ENCODE measurements at regions of chr12 and their contacts with region 1.

Region 1: DNA sequence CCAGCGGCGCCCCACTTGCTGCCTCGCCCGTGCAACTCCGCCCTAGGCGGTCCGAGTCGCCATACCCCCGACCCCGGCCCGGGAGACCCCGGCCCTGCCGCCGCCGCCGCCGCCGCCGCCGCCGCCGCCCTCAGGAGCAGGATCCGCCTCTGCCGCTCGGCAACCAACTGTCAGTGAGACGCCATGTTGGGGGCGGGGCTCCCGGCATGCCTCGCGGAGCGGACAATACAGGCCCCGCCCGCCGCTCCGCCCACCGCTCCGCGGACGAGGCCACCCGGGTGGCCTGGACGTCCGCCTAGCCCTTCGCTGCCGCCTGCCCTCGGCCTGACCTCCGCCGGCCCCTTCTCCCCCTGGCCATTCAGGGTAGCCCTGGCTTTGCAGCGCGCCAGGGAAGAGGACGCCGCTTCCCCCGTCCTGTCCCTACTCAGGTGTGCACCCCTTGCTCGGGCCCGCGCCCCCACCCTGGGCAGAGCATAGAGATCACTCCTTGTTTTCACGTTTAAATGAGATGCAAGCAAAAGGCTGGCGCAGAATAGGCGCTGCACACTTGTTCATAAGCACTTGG is at the start of gene HECTD4:
- DNase-seq: peak; percentile 89
- H3K4me3 Mint-ChIP-seq: peak within 1 kb of the TSS; percentile 88
- H3K27ac Mint-ChIP-seq: peak within 1 kb of the TSS; percentile 72
- H3K4me1 Mint-ChIP-seq: peaks cover 18% of the 10 kb centered on the region
- H3K27me3 Mint-ChIP-seq: no peaks in the 10 kb centered on the region
- CTCF ChIP-seq: no peak
- total RNA-seq, gene HECTD4: 35.2 and 46.7 TPM in 2 replicates

Region 2: DNA sequence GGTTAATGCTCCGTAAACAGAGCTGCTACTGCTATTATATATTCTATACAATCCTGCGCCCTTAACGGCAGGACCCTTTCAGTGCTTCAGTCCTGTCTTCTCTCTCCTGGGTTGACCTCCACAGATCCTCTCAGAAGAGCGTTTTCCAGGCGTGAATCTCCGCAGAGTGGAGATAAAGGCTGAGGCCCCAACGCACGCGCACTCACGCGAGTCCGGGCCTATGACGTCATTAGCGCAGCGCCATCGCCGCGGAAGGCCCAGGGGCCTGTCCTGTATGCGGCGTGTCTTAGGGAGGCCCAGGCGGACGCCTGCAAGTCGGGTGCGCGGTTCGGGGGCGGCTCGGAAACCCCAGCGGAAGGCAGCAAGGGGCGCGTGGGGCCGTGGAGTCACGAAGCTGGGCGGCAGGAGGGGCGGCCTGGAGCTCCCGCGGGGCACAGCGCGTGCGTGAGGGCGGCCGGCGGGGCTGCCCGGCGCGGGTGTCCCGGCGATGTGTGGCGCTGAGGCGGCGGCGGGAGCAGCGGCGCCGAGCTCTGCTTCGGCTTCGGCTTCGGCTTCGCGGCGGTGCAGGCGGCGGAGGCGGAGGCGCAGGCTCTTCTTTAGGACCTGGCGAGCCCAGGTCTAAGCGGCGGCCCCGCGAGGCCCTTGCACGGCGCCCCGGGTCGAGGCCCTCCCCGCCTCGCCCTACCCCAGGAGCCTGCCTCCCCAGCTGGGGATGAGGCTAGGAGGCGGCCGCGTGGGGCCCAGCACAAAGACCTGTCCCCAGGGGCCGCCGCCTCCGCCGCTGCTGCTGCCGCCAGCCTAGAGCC is 540.4 kb before region 1 on chr12 and contains the start of gene MAPKAPK5:
- CTCF ChIA-PET with region 1: no interaction called
- POLR2A ChIA-PET with region 1: no interaction called
- intact Hi-C with region 1: loop called (anchors 10 kb)
- DNase-seq: peak; percentile 92
- H3K4me3 Mint-ChIP-seq: peak within 1 kb of the TSS; percentile 93
- H3K27ac Mint-ChIP-seq: peak within 1 kb of the TSS; percentile 99
- H3K4me1 Mint-ChIP-seq: peaks cover 26% of the 10 kb centered on the region
- H3K27me3 Mint-ChIP-seq: no peaks in the 10 kb centered on the region
- CTCF ChIP-seq: no peak
- total RNA-seq, gene MAPKAPK5: 46.3 and 51.3 TPM in 2 replicates

Region 3: GRCh38 chr12:112116232-112117060 is 265.9 kb before region 1 on chr12:
- CTCF ChIA-PET with region 1: interaction called, 6 read pairs
- POLR2A ChIA-PET with region 1: no interaction called
- intact Hi-C with region 1: loop called (anchors 1 kb)
- DNase-seq: peak; percentile 35
- H3K4me3 Mint-ChIP-seq: peak overlapping the region; percentile 28
- H3K27ac Mint-ChIP-seq: peak overlapping the region; percentile 90
- H3K4me1 Mint-ChIP-seq: peaks cover 18% of the 10 kb centered on the region
- H3K27me3 Mint-ChIP-seq: no peaks in the 10 kb centered on the region
- CTCF ChIP-seq: no peak

Region 4: GRCh38 chr12:112243255-112244110 is 138.8 kb before region 1 on chr12:
- CTCF ChIA-PET with region 1: interaction called, 10 read pairs
- POLR2A ChIA-PET with region 1: interaction called, 4 read pairs
- intact Hi-C with region 1: no loop called
- DNase-seq: no peak
- H3K4me3 Mint-ChIP-seq: no peak overlapping the region
- H3K27ac Mint-ChIP-seq: no peak overlapping the region
- H3K4me1 Mint-ChIP-seq: no peaks in the 10 kb centered on the region
- H3K27me3 Mint-ChIP-seq: no peaks in the 10 kb centered on the region
- CTCF ChIP-seq: no peak

Region 5: GRCh38 chr12:112294793-112295192 is 87.5 kb before region 1 on chr12:
- CTCF ChIA-PET with region 1: no interaction called
- POLR2A ChIA-PET with region 1: no interaction called
- intact Hi-C with region 1: loop called (anchors 1 kb)
- DNase-seq: peak; percentile 13
- H3K4me3 Mint-ChIP-seq: no peak overlapping the region
- H3K27ac Mint-ChIP-seq: no peak overlapping the region
- H3K4me1 Mint-ChIP-seq: peaks cover 5% of the 10 kb centered on the region
- H3K27me3 Mint-ChIP-seq: no peaks in the 10 kb centered on the region
- CTCF ChIP-seq: no peak

Region 6: DNA sequence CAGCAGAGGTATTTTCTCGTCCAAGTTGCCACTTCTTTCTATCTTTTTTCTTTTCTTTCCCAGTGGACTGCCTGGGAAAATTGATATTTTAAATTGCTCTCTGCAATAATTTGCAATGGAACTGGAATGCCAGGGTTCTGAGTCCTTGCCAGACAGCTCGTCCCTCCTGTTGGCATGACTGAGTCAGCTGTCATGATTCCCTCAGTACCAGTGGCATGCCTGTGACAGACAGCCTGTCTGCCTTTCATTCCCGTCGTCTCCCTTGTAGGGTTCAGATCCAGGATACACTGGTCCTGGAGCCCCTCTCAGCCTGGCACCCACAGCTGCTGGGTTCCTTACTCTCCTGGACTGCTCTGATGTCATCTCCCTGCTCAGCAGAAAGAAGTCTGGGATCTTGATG is 121.2 kb after region 1 on chr12:
- CTCF ChIA-PET with region 1: no interaction called
- POLR2A ChIA-PET with region 1: no interaction called
- intact Hi-C with region 1: no loop called
- DNase-seq: no peak
- H3K4me3 Mint-ChIP-seq: no peak overlapping the region
- H3K27ac Mint-ChIP-seq: no peak overlapping the region
- H3K4me1 Mint-ChIP-seq: no peaks in the 10 kb centered on the region
- H3K27me3 Mint-ChIP-seq: no peaks in the 10 kb centered on the region
- CTCF ChIP-seq: no peak

Region 7: GRCh38 chr12:112564162-112564784 is 182.0 kb after region 1 on chr12:
- CTCF ChIA-PET with region 1: no interaction called
- POLR2A ChIA-PET with region 1: no interaction called
- intact Hi-C with region 1: no loop called
- DNase-seq: no peak
- H3K4me3 Mint-ChIP-seq: no peak overlapping the region
- H3K27ac Mint-ChIP-seq: no peak overlapping the region
- H3K4me1 Mint-ChIP-seq: no peaks in the 10 kb centered on the region
- H3K27me3 Mint-ChIP-seq: peaks cover 11% of the 10 kb centered on the region
- CTCF ChIP-seq: no peak

Measured in MCF 10A (cell line).